CD4-positive, alpha-beta T cell (primary cell): ENCODE measurements at regions of chrX and their contacts with region 1.

Region 1: DNA sequence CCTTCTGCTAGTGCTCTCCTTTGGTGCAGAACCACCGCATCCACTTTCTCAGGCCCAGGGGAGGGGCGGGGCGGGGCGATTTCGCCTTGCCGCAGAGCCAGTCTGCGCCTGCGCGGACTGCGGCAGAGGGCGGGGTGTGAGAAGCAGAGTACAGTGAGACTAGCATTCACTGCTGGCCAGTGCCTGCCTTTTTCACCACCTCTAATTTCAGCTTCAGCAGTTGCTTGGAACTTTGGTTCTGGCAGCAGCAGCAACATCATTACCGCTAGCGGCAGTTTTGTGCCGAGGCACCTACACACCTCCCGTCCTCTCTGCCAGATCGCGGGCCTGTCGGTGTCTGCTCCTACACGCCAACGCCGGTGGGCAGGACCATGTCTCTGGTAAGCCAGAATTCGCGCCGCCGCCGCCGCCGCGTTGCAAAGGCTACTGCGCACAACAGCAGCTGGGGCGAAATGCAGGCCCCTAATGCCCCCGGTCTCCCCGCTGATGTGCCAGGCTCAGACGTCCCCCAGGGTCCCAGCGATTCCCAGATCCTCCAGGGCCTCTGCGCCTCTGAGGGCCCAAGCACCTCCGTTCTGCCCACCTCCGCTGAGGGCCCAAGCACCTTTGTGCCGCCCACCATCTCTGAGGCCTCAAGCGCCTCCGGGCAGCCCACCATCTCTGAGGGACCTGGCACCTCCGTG is at the start of gene MAGEE1:
- DNase-seq: peak; percentile 70 to 90 (median 79)
- ATAC-seq: peak; percentile 79
- H3K4me3 ChIP-seq: peak within 1 kb of the TSS; percentile 90
- H3K4me3 Mint-ChIP-seq: peak within 1 kb of the TSS; percentile 97
- H3K27ac ChIP-seq: peak within 1 kb of the TSS; percentile 53 to 60
- H3K27ac Mint-ChIP-seq: peak within 1 kb of the TSS; percentile 94
- H3K4me1 ChIP-seq: peaks cover 30% of the 10 kb centered on the region
- H3K4me1 Mint-ChIP-seq: peaks cover 42% of the 10 kb centered on the region
- H3K27me3 ChIP-seq: no peaks in the 10 kb centered on the region
- H3K27me3 Mint-ChIP-seq: no peaks in the 10 kb centered on the region
- CTCF ChIP-seq: no peak
- total RNA-seq, gene MAGEE1: 12.4 to 12.7 TPM

Region 2: GRCh38 chrX:75156021-75156945 is 1271.4 kb before region 1 on chrX and contains the start of gene ABCB7:
- CTCF ChIA-PET with region 1: no interaction called
- POLR2A ChIA-PET with region 1: no interaction called
- intact Hi-C with region 1: loop called in 1 of 2 experiments (anchors 10 kb)
- DNase-seq: peak; percentile 38 to 85 (median 57)
- ATAC-seq: peak; percentile 94
- H3K4me3 ChIP-seq: peak within 1 kb of the TSS; percentile 77
- H3K4me3 Mint-ChIP-seq: peak within 1 kb of the TSS; percentile 95
- H3K27ac ChIP-seq: peak within 1 kb of the TSS; percentile 52 to 76
- H3K27ac Mint-ChIP-seq: peak within 1 kb of the TSS; percentile 93
- H3K4me1 ChIP-seq: peaks cover 3% of the 10 kb centered on the region
- H3K4me1 Mint-ChIP-seq: peaks cover 63% of the 10 kb centered on the region
- H3K27me3 ChIP-seq: no peaks in the 10 kb centered on the region
- H3K27me3 Mint-ChIP-seq: no peaks in the 10 kb centered on the region
- CTCF ChIP-seq: no peak
- total RNA-seq, gene ABCB7: 13.4 to 14.5 TPM

Region 3: DNA sequence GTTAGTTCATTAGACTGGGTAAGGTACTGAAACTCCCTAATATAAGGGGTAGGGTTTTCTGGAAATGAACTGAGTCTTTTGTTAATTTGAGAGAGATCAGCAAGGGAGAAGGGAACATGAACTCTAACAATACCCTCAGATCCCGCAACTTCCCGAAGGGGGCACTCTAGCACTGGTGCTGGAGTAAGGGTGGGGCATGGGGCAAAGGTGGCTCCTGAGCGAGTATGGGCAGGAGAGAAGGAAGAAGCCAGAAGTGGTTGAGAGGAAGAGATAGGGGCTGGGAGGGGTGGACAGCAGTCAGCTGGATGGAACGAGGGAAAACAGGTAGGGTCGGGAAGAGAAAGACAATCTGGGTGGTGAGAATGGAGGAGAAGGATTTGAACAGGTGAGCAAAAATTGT is 459.4 kb before region 1 on chrX:
- CTCF ChIA-PET with region 1: no interaction called
- POLR2A ChIA-PET with region 1: no interaction called
- intact Hi-C with region 1: no loop called
- DNase-seq: no peak
- ATAC-seq: no peak
- H3K4me3 ChIP-seq: no peak overlapping the region
- H3K4me3 Mint-ChIP-seq: no peak overlapping the region
- H3K27ac ChIP-seq: no peak overlapping the region
- H3K27ac Mint-ChIP-seq: no peak overlapping the region
- H3K4me1 ChIP-seq: no peaks in the 10 kb centered on the region
- H3K4me1 Mint-ChIP-seq: no peaks in the 10 kb centered on the region
- H3K27me3 ChIP-seq: no peaks in the 10 kb centered on the region
- H3K27me3 Mint-ChIP-seq: no peaks in the 10 kb centered on the region
- CTCF ChIP-seq: no peak

Region 4: DNA sequence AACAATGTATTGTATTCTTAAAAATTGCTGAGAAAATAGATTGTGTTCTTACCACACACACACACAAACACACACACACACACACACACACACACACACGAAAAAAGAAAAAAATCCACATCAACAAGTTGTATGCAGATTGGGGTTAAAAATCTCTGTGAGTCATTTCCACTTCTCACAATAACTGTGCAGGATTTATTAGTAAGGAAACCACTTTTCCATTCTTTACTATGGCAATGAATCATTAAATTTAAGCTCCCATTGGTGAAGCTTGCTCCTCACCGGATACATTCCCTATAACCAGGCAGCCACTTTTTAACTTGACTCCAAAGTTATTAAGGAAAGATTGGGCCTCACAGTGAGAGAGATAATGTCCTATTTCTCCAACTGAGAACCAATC is 19.9 kb before region 1 on chrX:
- CTCF ChIA-PET with region 1: no interaction called
- POLR2A ChIA-PET with region 1: no interaction called
- intact Hi-C with region 1: no loop called
- DNase-seq: no peak
- ATAC-seq: no peak
- H3K4me3 ChIP-seq: no peak overlapping the region
- H3K4me3 Mint-ChIP-seq: no peak overlapping the region
- H3K27ac ChIP-seq: no peak overlapping the region
- H3K27ac Mint-ChIP-seq: no peak overlapping the region
- H3K4me1 ChIP-seq: no peaks in the 10 kb centered on the region
- H3K4me1 Mint-ChIP-seq: no peaks in the 10 kb centered on the region
- H3K27me3 ChIP-seq: no peaks in the 10 kb centered on the region
- H3K27me3 Mint-ChIP-seq: no peaks in the 10 kb centered on the region
- CTCF ChIP-seq: no peak

Region 5: DNA sequence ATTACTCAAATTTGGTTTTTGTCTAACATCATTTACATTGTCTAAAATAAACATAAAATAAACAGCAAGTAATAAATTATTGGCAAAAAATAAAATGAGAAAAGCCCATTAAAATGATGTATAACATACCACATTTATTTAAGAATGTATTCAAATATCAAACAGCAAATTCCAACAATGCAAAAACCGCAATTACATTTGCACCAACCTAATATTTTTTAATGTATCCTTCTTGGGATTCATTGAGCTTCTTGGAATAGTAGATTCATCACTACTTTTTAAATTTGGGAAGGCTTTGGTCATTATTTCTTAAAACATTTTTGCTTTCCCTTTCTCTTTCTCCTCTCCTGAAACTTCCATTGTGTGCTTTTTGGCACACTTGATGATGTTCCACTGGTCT is 400.0 kb after region 1 on chrX:
- CTCF ChIA-PET with region 1: no interaction called
- POLR2A ChIA-PET with region 1: no interaction called
- intact Hi-C with region 1: no loop called
- DNase-seq: no peak
- ATAC-seq: no peak
- H3K4me3 ChIP-seq: no peak overlapping the region
- H3K4me3 Mint-ChIP-seq: no peak overlapping the region
- H3K27ac ChIP-seq: no peak overlapping the region
- H3K27ac Mint-ChIP-seq: no peak overlapping the region
- H3K4me1 ChIP-seq: no peaks in the 10 kb centered on the region
- H3K4me1 Mint-ChIP-seq: no peaks in the 10 kb centered on the region
- H3K27me3 ChIP-seq: no peaks in the 10 kb centered on the region
- H3K27me3 Mint-ChIP-seq: no peaks in the 10 kb centered on the region
- CTCF ChIP-seq: no peak